ENCODE measurements at regions of chr12 and their contacts with region 1.

Region 1: DNA sequence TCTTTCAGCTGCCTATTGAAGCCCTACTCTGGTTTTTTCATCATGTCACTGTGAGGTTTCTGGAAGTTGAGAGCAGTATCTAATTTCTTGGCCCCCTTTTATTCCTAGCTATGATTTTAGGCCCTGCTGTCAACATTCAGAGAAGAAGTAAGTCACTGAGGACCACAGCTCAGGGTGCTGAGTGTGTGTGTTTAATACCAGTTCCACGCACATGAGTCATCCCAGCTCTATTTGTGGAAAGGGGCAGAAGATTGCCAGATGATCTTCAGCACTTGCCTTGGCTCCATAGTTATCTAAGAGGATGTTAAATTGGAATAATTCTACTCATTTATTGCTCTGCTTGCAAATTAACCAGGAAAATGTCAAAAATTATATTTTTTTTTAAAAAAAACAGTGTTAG is 65.5 kb upstream of the SLC38A4 start:
- DNase-seq: no peak
- ATAC-seq: peak; percentile 72

Region 2: GRCh38 chr12:46843811-46844210 is 47.5 kb before region 1 on chr12:
- intact Hi-C with region 1: no loop called
- DNase-seq: no peak
- ATAC-seq: no peak

Region 3: DNA sequence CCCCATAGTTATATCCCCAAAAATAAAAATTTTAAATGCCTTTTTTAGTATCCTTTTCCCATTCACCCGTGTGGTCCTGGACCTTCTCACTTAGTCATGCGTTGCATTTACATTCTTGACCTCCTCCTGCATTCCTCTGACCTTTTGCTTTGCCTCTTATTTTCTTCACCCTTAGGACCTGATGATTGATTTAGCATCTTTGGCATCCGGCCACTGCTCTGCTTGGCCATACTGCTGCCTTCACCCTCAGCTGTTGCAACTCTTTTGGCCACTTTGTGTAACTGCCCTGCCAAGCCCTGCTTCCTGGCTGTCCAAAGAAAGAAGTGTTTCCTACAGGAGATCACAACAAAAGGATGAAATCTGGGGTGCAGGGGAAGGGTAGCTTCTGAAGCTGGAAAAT is 16.7 kb before region 1 on chr12:
- intact Hi-C with region 1: loop called (anchors 1 kb)
- DNase-seq: peak; percentile 23
- ATAC-seq: peak; percentile 89